ENCODE measurements at regions of chr10 and their contacts with region 1.

Region 1: DNA sequence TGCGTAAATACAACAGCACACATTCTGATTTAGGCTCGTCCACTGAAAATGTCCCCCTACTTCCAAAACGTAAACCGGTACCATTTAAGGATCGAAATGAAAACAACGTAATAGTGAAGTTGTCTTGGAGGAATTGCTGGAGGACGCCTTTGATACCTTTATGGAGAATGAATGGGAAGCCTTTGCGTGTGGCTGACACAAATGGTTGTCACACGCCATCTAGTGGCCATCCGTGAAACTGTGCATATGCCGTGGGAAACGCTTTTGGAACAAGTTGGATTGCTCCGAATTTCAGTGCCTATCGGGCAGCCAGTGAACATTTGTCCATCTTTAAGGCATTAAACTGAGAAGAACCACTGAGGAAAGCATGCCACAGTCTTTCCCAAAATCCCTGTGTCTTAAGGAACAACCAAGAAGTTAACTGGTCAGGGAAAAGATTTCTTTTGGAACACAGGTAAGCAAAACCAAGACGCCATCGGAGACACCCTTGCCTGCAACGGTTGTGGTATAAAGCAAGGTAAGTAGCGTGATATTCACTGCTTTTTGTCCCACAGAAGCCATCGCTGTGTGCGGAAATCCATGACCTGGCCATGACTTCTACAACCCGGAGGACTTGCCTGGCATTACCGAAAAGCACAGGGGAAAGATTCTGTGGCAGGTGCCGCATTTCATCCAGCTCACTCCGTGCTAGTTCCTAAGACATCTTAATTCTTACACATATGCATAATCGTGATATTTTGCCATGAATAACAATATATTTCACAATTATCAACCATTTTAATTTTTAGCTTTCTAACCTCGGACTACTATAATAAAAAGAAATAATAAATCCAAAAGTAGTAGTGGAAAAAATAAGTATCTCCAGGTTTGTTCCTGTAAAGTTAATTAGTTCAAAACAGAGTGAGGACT is 100.6 kb downstream of the FAM204A start:
- DNase-seq: peak; percentile 63 to 94 (median 81)
- H3K4me3 ChIP-seq: no peak overlapping the region
- H3K27ac ChIP-seq: no peak overlapping the region
- H3K4me1 ChIP-seq: no peaks in the 10 kb centered on the region
- H3K27me3 ChIP-seq: peaks cover 63% of the 10 kb centered on the region
- CTCF ChIP-seq: peak; percentile 84 to 96 (median 92)
- POLR2A ChIP-seq: no peak

Region 2: GRCh38 chr10:117537436-117537903 is 704.0 kb before region 1 on chr10:
- intact Hi-C with region 1: loop called (anchors 5 to 10 kb)
- DNase-seq: peak in 2 of 7 donors; percentile 16 to 39
- H3K4me3 ChIP-seq: peak overlapping the region in 1 of 4 donors; percentile 17
- H3K27ac ChIP-seq: no peak overlapping the region
- H3K4me1 ChIP-seq: peaks cover 5 to 25% of the 10 kb centered on the region in 2 donors
- H3K27me3 ChIP-seq: peaks cover 98% of the 10 kb centered on the region
- CTCF ChIP-seq: peak in 3 of 6 experiments; percentile 53 to 66 (median 58)
- POLR2A ChIP-seq: no peak